AG04450 (cell line): ENCODE measurements at regions of chr14 and their contacts with region 1.

Region 1: DNA sequence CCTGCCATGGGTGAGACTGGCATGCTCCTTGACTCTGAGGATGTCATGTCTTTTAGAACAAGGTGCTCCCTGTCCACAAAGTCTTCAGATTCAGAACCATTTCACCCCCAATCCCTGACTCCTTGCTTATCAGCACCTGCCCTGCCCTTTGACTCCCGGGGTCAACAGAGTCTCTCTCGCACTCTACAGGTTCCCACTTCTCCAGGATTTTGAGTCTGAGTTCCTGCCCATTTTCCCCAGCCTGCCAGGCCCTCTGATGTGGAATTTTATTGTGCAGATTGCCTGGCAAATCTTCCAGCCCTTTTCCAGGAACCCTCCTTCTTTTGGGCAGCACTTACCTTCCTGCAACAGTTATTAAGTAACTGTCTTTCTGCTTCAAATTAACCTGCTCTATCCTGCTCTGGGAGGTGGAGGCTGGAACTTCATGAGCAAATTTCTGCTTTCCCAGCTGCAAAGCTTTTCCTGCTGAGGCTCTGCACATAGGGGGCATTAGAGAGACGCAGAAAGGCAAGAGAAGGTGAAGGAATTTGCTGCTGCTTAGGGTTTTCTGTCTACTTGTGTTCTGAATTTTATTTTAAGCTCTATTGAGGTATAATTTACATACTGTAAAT is 259.0 kb downstream of the PCNX1 start:
- DNase-seq: peak; percentile 21
- H3K4me3 ChIP-seq: no peak overlapping the region
- H3K27ac ChIP-seq: no peak overlapping the region
- H3K27me3 ChIP-seq: no peaks in the 10 kb centered on the region
- CTCF ChIP-seq: peak; percentile 76

Region 2: GRCh38 chr14:71155743-71156142 is 10.5 kb before region 1 on chr14:
- CTCF ChIA-PET with region 1: interaction called, 10 read pairs
- POLR2A ChIA-PET with region 1: no interaction called
- DNase-seq: no peak
- H3K4me3 ChIP-seq: no peak overlapping the region
- H3K27ac ChIP-seq: no peak overlapping the region
- H3K27me3 ChIP-seq: no peaks in the 10 kb centered on the region
- CTCF ChIP-seq: no peak

Region 3: DNA sequence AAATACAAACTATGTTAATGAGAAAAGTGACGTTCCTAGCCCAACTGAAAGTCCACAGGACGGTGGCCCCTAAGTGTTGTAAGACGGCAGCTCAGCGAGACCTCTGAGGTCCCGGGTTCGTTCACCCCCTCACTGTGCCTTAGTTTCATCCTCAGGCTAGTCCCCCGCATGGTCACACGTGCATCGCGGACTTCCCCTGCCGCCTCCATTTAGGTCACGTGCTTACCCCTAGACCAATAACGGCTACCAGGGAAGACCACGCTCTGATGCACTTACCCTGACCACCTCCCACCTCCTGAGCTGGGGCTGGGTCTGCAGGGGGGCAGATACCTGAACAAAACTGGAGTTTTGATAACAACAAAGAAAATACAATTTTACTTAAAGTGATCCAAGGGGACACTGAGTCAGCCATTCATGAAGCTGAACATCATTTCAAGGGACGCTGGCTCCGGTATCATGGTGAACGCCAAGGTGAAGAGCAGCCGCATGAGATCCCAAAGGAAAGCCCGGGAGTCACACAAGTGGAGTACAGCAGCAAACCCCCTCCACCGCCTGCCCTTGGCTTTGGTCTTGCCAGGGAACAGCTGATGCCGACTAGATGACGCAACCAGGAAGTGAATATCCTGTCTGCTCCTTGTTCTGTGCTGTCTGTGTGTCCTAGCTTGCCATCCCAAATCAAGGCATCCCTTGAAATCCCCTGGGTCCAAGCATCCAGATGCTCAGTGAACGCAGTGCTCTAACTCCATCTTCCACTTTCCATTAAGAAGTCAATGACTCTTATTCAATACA is 15.1 kb after region 1 on chr14:
- CTCF ChIA-PET with region 1: interaction called, 18 read pairs
- POLR2A ChIA-PET with region 1: interaction called, 5 read pairs
- DNase-seq: no peak
- H3K4me3 ChIP-seq: no peak overlapping the region
- H3K27ac ChIP-seq: no peak overlapping the region
- H3K27me3 ChIP-seq: no peaks in the 10 kb centered on the region
- CTCF ChIP-seq: no peak